ENCODE measurements at regions of chr12 and their contacts with region 1.

Region 1: GRCh38 chr12:7162691-7163114 is 26.8 kb upstream of the PEX5 start:
- DNase-seq: peak; percentile 45
- ATAC-seq: peak; percentile 72
- H3K4me3 Mint-ChIP-seq: no peak overlapping the region
- H3K27ac Mint-ChIP-seq: no peak overlapping the region
- H3K4me1 Mint-ChIP-seq: peaks cover 8% of the 10 kb centered on the region
- H3K27me3 Mint-ChIP-seq: peaks cover 14% of the 10 kb centered on the region
- CTCF ChIP-seq: peak; percentile 30

Region 2: DNA sequence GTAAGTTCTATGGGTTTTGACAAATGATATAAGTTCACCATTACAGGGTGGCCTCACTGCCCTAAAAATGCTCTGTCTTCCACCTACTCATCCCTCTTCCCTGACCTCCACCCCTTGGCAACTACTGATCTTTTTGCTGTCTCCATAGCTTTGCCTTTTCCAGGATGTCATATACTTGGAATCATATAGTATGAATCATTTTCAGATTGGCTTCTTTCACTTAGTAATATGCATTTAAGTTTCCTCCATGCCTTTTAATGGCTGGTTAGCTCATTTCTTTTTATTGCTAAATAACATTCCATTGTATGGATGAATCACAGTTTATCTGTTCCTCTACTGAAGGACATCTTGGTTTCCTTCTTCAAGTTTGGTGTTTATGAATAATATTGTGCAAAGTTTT is 12.8 kb after region 1 on chr12:
- CTCF ChIA-PET with region 1: interaction called, 12 read pairs
- POLR2A ChIA-PET with region 1: interaction called, 3 read pairs
- intact Hi-C with region 1: no loop called
- DNase-seq: no peak
- ATAC-seq: no peak
- H3K4me3 Mint-ChIP-seq: no peak overlapping the region
- H3K27ac Mint-ChIP-seq: no peak overlapping the region
- H3K4me1 Mint-ChIP-seq: no peaks in the 10 kb centered on the region
- H3K27me3 Mint-ChIP-seq: peaks cover 19% of the 10 kb centered on the region
- CTCF ChIP-seq: no peak

Measured in activated CD8-positive, alpha-beta T cell treated with anti-CD3 and anti-CD28 coated beads for 36 hours (primary cell).